ENCODE measurements at regions of chr5 and their contacts with region 1.

Region 1: DNA sequence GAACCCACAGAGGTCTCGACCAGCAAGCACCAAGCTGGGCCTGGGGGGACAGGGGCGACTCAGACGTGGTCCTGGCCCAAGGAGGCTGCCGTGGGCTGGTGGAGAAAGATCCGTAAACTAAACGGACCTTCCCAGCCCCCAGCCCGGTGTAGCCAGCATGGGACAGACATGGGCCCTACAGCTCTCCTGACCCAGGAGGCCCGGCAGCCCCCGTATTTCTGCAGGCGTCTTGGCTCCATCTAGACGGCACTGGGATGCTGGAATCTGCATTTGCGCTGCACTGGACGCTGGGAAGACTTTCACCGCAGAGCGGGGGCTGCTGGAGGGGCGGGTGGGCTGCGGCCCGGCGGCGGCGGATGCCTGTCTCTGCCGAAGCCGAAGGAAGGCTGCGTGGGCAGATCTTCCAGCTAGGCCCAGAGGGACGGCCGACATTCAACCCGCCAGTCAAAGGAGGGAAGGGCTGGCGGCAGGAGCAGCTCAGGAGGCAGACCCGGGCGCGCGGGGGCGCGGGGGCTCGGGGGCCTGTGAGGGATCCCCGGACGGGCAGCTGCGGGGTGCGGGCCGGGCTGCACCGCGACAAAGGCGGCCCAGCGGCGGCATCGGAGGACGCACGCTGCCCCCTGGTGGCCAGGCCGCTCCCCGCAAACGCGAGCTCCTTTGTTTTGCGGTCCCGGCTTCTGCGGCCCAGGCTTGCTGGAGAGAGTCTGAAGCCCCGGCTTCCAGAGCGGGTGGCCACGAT is 266.2 kb downstream of the NSG2 start:
- DNase-seq: peak; percentile 61 to 74
- ATAC-seq: peak; percentile 56 to 87 (median 78)
- H3K4me3 ChIP-seq: peak overlapping the region in 9 of 10 donors; percentile 19 to 61 (median 50)
- H3K27ac ChIP-seq: no peak overlapping the region
- H3K4me1 ChIP-seq: peaks cover 0 to 14% (median 7%) of the 10 kb centered on the region in 9 donors
- H3K27me3 ChIP-seq: peaks cover 0 to 45% (median 33%) of the 10 kb centered on the region in 7 donors
- CTCF ChIP-seq: peak; percentile 72 to 91 (median 90)

Region 2: DNA sequence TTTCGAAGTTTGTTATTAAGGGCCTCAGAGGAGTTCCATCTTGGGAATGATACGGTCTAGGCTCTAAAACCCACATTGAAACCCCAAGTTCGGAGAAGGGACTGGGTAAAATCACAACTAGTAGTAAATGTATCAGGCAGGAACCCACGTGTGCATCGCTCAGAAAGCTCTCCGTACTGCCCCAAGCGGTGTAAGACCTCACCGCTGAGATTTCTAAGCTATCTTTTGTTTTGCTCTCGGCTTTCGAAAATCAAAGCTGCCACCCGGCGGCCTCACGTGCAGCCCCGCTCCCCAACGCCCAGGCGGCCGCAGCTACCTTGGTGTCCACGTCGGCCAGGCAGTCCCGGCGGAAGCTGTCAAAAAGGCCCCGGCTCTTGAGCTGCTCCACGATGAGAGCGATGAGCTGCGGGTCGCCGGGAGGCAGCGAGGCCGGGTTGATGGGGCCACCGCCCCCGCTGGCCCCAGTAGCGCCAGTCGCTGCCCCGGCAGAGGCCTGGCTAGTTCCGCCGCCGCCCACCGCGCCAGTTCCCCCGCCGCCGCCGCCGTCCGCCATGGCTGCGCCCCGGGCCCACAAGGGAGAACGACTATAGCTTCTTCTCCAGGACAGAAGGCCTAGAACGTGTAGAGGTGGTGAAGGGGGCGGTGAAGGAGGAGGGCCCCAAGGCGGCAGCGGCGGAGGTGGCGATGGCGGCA is 695.7 kb before region 1 on chr5:
- intact Hi-C with region 1: loop called (anchors 5 to 10 kb)
- DNase-seq: peak; percentile 43 to 52
- ATAC-seq: peak; percentile 45 to 75 (median 68)
- H3K4me3 ChIP-seq: peak overlapping the region; percentile 62 to 99 (median 96)
- H3K27ac ChIP-seq: peak overlapping the region; percentile 88 to 98 (median 94)
- H3K4me1 ChIP-seq: peaks cover 0 to 59% (median 49%) of the 10 kb centered on the region in 9 donors
- H3K27me3 ChIP-seq: no peaks in the 10 kb centered on the region
- CTCF ChIP-seq: peak in 8 of 9 donors; percentile 34 to 78 (median 64)

Region 3: GRCh38 chr5:173625696-173626504 is 685.8 kb before region 1 on chr5:
- intact Hi-C with region 1: loop called in 2 of 10 experiments (anchors 10 kb)
- DNase-seq: no peak
- ATAC-seq: peak; percentile 44 to 82 (median 62)
- H3K4me3 ChIP-seq: no peak overlapping the region
- H3K27ac ChIP-seq: peak overlapping the region in 2 of 10 donors; percentile 15 to 16
- H3K4me1 ChIP-seq: peaks cover 0 to 16% (median 9%) of the 10 kb centered on the region in 9 donors
- H3K27me3 ChIP-seq: no peaks in the 10 kb centered on the region
- CTCF ChIP-seq: peak in 5 of 9 donors; percentile 13 to 48 (median 39)

Region 4: GRCh38 chr5:173984218-173984617 is 327.5 kb before region 1 on chr5:
- intact Hi-C with region 1: loop called in 1 of 10 experiments (anchors 10 kb)
- DNase-seq: no peak
- ATAC-seq: peak in 6 of 8 donors; percentile 42 to 81 (median 66)
- H3K4me3 ChIP-seq: no peak overlapping the region
- H3K27ac ChIP-seq: no peak overlapping the region
- H3K4me1 ChIP-seq: no peaks in the 10 kb centered on the region
- H3K27me3 ChIP-seq: peaks cover 0 to 20% (median 0%) of the 10 kb centered on the region in 7 donors
- CTCF ChIP-seq: peak in 7 of 9 donors; percentile 39 to 58 (median 49)

Region 5: DNA sequence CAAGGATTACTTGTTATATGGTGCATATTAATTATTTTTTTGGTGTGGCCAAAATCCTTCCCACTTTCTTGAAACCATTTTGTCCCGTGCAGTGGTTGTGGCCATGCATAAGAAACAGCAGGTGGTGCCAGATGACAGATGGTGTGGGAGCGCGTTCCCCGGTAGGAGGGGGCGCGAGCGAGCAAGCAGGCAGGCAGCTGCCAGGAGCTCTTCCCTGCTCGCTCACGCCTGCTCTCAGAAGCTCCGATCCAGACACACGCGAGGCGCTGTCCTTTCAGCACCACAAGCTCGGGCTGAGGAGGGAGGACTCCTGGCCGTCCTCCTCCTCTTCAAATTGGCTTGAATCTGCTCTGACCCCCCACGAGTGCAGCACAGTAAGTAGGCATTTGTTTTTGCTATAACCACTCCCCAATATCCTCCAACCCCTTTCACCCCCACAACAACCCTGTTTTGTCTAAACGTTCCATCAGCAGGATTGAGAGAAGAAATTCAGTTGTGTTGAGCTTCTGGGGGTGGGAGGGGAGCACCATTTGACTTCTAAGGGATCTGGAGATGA is 266.2 kb before region 1 on chr5 and contains the start of gene NSG2:
- intact Hi-C with region 1: loop called in 9 of 10 experiments (anchors 1 to 5 kb)
- DNase-seq: peak; percentile 77 to 79
- ATAC-seq: peak; percentile 92 to 100 (median 98)
- H3K4me3 ChIP-seq: no peak within 1 kb of the TSS
- H3K27ac ChIP-seq: no peak within 1 kb of the TSS
- H3K4me1 ChIP-seq: no peaks in the 10 kb centered on the region
- H3K27me3 ChIP-seq: peaks cover 0 to 13% (median 6%) of the 10 kb centered on the region in 7 donors
- CTCF ChIP-seq: peak; percentile 34 to 81 (median 69)
- total RNA-seq, gene NSG2: 0.11 to 0.82 (median 0.32) TPM in 8 of 10 donors, not detected in the others